K562 (cell line): ENCODE measurements at regions of chr3 and their contacts with region 1.

Region 1: DNA sequence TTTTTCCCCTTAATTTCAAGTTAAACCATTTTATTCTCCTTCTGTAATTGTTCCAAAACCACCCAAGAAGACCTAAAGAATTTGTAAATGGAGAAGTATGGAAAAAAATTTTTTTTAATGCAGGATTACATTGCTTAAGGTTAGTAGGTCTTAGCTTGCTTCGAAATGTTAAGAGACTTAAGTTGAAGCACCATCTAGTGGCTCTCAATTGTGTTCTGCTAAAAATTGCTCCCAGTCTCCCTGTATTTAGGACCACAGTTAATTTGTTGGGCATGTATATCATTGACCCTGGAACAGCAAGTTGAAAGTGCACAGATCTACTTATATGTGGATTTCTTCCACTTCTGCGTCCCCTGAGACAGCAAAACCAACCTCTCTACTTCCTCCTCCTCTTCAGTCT is 32.4 kb downstream of the CD200R1L start:
- DNase-seq: peak in 1 of 4 experiments; percentile 19
- ATAC-seq: peak; percentile 65
- H3K4me3 ChIP-seq: no peak overlapping the region
- H3K27ac ChIP-seq: no peak overlapping the region
- H3K4me1 ChIP-seq: peaks cover 4 to 27% of the 10 kb centered on the region in 2 experiments
- H3K27me3 ChIP-seq: no peaks in the 10 kb centered on the region
- CTCF ChIP-seq: peak in 2 of 3 experiments; percentile 11 to 44; a peak in 2 of 6 replicates
- EP300 ChIP-seq: no peak
- POLR2A ChIP-seq: no peak
- RAD21 ChIP-seq: peak; percentile 35 to 62; a peak in 3 of 4 replicates

Region 2: DNA sequence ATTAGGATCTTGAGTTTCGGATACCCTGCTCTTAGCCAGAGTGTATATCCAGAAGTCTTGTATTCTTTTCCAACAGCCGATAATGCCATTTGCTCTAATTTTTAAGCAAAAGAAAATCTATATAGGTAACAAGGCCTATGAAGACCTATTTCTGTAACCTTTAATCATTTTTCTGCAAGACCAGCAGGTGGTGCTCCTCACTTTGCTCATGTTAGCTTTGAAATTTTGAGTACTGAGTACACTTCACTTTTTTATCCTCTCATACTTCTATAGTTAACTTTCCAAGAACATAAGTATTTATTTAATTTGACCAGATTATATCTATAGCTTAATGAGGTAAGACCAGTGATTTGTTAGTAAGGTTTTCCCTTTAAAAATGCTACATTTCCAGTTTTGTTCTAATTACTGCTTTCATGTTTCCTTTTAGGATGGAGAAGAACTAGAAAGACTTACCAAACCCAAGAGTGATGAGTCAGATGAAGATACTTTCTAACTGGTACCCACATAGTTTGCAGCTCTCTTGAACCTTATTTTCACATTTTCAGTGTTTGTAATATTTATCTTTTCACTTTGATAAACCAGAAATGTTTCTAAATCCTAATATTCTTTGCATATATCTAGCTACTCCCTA is 231.9 kb before region 1 on chr3:
- CTCF ChIA-PET with region 1: no interaction called
- POLR2A ChIA-PET with region 1: no interaction called
- in situ Hi-C with region 1: no loop called
- intact Hi-C with region 1: loop called (anchors 5 kb)
- DNase-seq: peak in 3 of 4 experiments; percentile 11 to 49 (median 16)
- ATAC-seq: peak; percentile 53; the same call in 2 of the 3 replicates
- H3K4me3 ChIP-seq: no peak overlapping the region
- H3K27ac ChIP-seq: no peak overlapping the region
- H3K4me1 ChIP-seq: no peaks in the 10 kb centered on the region
- H3K27me3 ChIP-seq: no peaks in the 10 kb centered on the region
- CTCF ChIP-seq: peak; percentile 30 to 72 (median 40); a peak in 5 of 6 replicates
- EP300 ChIP-seq: no peak
- POLR2A ChIP-seq: no peak
- RAD21 ChIP-seq: peak; percentile 67 to 76

Region 3: DNA sequence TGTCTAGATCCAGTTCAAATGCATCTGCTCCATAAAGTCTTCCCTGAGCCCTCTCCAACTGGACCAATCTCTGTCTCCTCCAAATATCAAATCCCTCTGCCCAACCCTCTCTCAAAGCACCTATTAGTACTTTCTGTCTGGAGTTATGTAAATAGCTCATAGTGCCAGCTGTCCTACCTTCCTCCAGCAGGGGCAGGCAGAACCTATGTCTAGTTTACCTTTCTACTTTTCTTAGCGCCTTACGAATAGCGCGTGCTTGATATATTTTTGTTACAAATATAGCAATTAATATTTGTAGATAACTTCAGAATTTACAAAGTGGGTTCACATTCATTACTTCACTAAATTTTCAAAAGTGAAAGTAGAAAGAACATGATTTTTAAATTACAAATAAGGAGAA is 159.3 kb before region 1 on chr3:
- CTCF ChIA-PET with region 1: no interaction called
- POLR2A ChIA-PET with region 1: no interaction called
- in situ Hi-C with region 1: no loop called
- intact Hi-C with region 1: loop called (anchors 5 kb)
- DNase-seq: no peak
- ATAC-seq: peak; percentile 75
- H3K4me3 ChIP-seq: no peak overlapping the region
- H3K27ac ChIP-seq: no peak overlapping the region
- H3K4me1 ChIP-seq: no peaks in the 10 kb centered on the region; a peak in 1 of 5 replicates
- H3K27me3 ChIP-seq: no peaks in the 10 kb centered on the region
- CTCF ChIP-seq: peak in 2 of 3 experiments; percentile 32 to 41; a peak in 2 of 6 replicates
- EP300 ChIP-seq: no peak
- POLR2A ChIP-seq: no peak
- RAD21 ChIP-seq: peak in 1 of 2 experiments; percentile 23; a peak in 1 of 4 replicates

Region 4: DNA sequence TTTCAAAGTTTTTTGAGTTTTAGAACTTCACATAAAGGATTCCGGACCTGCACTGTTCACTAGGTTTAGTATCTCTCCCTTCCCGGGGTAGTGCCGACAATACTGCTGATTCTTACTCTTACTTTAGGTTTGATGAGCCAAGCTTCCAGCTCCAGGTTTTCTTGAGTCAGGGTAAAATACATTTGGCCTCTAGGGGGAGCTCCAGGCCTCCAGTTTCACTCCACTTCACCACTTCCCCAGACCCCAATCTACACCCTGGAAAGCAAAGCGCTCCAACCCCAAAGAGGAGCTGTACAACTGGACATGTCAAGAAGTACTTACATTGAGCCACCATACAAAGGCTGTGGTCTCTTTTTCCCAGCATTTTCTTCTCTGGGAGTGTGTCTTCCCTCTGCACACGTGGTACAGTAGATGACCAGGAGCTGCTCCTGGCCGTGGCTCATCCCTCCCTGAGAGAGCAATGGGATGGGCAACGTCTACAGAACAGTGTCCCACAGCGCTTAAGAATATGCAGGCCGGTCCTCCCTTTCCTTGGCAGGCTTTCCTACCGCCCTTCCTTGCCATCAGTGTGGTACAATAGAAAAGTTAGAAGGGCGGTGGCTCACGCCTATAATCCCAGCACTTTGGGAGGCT is 79.4 kb before region 1 on chr3:
- CTCF ChIA-PET with region 1: interaction called, 5 read pairs
- POLR2A ChIA-PET with region 1: no interaction called
- in situ Hi-C with region 1: no loop called
- intact Hi-C with region 1: loop called (anchors 2 kb)
- DNase-seq: peak; percentile 37 to 73 (median 49)
- ATAC-seq: peak; percentile 93
- H3K4me3 ChIP-seq: no peak overlapping the region
- H3K27ac ChIP-seq: no peak overlapping the region
- H3K4me1 ChIP-seq: peaks cover 0 to 4% of the 10 kb centered on the region in 2 experiments; a peak in 1 of 5 replicates
- H3K27me3 ChIP-seq: no peaks in the 10 kb centered on the region
- CTCF ChIP-seq: peak; percentile 53 to 75 (median 65)
- EP300 ChIP-seq: no peak
- POLR2A ChIP-seq: no peak
- RAD21 ChIP-seq: peak; percentile 72 to 79

Region 5: GRCh38 chr3:112966633-112967032 is 152.4 kb after region 1 on chr3:
- CTCF ChIA-PET with region 1: no interaction called
- POLR2A ChIA-PET with region 1: no interaction called
- in situ Hi-C with region 1: no loop called
- intact Hi-C with region 1: no loop called
- DNase-seq: no peak
- ATAC-seq: no peak
- H3K4me3 ChIP-seq: no peak overlapping the region
- H3K27ac ChIP-seq: no peak overlapping the region
- H3K4me1 ChIP-seq: no peaks in the 10 kb centered on the region
- H3K27me3 ChIP-seq: no peaks in the 10 kb centered on the region
- CTCF ChIP-seq: no peak
- EP300 ChIP-seq: no peak
- POLR2A ChIP-seq: no peak
- RAD21 ChIP-seq: no peak

Region 6: GRCh38 chr3:112979240-112979832 is 165.1 kb after region 1 on chr3:
- CTCF ChIA-PET with region 1: no interaction called
- POLR2A ChIA-PET with region 1: no interaction called
- in situ Hi-C with region 1: no loop called
- intact Hi-C with region 1: loop called (anchors 5 kb)
- DNase-seq: peak; percentile 7 to 31 (median 10)
- ATAC-seq: no peak
- H3K4me3 ChIP-seq: no peak overlapping the region
- H3K27ac ChIP-seq: no peak overlapping the region
- H3K4me1 ChIP-seq: no peaks in the 10 kb centered on the region
- H3K27me3 ChIP-seq: no peaks in the 10 kb centered on the region
- CTCF ChIP-seq: peak in 2 of 3 experiments; percentile 36 to 53; a peak in 3 of 6 replicates
- EP300 ChIP-seq: no peak
- POLR2A ChIP-seq: no peak
- RAD21 ChIP-seq: peak; percentile 60 to 72